Activated T-helper 2 cell treated with anti-CD3 and anti-CD28 coated beads, Interferon-gamma antibody, Interleukin-2, Interleukin-4, amounts not matched to agents 10 μg/mL and 5 μg/mL and 100 μg/mL, durations not matched to agents 14 hours and 24 hours and 36 hours (primary cell): ENCODE measurements at regions of chr1 and their contacts with region 1.

Region 1: DNA sequence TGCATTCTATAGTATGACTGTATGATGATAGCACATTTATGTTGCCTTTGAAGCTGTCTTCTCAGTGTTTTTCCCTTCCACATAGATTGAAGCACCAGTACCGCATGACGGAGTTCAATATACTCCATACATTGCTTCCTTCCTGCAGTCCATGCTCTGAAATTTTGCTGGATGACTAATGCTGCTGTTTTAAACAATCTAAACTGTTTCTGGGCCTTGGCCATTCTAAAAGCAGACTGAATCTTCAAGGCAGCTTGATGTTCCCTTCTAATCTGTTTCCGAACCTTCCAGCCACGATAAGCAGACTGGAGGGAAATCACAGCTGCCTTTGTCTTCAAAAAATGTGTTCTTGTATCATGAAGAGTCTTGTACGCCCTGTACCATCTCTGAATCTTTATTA is 36.2 kb upstream of the F13B start:
- DNase-seq: no peak
- H3K4me3 Mint-ChIP-seq: no peak overlapping the region
- H3K27ac Mint-ChIP-seq: no peak overlapping the region
- H3K4me1 Mint-ChIP-seq: peaks cover 31% of the 10 kb centered on the region
- H3K27me3 Mint-ChIP-seq: no peaks in the 10 kb centered on the region

Region 2: DNA sequence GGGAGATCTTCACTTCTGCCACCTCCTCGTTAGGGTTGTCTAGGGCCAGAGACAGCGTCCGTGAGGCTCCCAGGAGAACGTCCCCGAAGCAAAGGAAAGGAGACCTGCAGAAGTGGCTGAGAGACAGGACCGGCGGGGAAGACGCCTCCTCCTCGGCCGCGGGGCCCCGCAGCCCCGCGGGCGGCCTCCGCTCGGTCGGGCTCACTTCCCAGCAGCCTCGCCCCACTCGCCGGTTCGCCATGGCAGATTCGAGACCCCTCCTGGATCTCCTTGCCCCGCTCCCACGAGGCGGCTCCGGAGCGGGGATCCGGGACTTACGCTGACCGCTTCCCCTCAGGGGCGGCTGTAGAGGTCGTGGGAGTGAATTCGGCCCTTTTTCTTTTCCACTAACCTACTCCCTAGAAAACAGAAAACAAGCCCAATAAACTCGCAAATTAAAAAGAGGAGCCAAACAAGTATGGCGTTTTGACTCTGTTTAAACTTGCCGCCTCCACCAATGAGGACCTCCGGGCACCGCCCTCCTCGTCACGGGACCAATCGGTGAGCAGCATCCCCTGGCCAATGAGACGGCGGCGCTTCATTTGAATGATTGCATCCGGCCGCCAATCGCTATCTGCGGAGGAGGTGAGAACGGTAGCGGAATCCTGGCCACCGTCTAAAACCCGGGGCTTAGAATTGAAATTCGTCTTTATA is 43.0 kb after region 1 on chr1 and contains the start of gene ASPM:
- intact Hi-C with region 1: loop called (anchors 5 kb)
- DNase-seq: peak; percentile 94
- H3K4me3 Mint-ChIP-seq: peak within 1 kb of the TSS; percentile 89
- H3K27ac Mint-ChIP-seq: peak within 1 kb of the TSS; percentile 97
- H3K4me1 Mint-ChIP-seq: peaks cover 31% of the 10 kb centered on the region
- H3K27me3 Mint-ChIP-seq: no peaks in the 10 kb centered on the region
- total RNA-seq, gene ASPM: 43.0 and 43.6 TPM in 2 replicates